Activated T-helper 1 cell treated with anti-CD3 and anti-CD28 coated beads, Interleukin-12 subunit alpha, Interleukin-12 subunit beta, Interleukin-2, Interleukin-4 antibody, amounts not matched to agents 30 ng/mL and 10 ng/mL and 1 ng/mL, durations not matched to agents 14 hours and 24 hours and 36 hours (primary cell): ENCODE measurements at regions of chr16 and their contacts with region 1.

Region 1: GRCh38 chr16:87203060-87203656 is 114.0 kb downstream of the C16orf95 start:
- DNase-seq: peak; percentile 36
- H3K4me3 Mint-ChIP-seq: no peak overlapping the region
- H3K27ac Mint-ChIP-seq: no peak overlapping the region
- H3K4me1 Mint-ChIP-seq: peaks cover 6% of the 10 kb centered on the region
- H3K27me3 Mint-ChIP-seq: peaks cover 9% of the 10 kb centered on the region

Region 2: DNA sequence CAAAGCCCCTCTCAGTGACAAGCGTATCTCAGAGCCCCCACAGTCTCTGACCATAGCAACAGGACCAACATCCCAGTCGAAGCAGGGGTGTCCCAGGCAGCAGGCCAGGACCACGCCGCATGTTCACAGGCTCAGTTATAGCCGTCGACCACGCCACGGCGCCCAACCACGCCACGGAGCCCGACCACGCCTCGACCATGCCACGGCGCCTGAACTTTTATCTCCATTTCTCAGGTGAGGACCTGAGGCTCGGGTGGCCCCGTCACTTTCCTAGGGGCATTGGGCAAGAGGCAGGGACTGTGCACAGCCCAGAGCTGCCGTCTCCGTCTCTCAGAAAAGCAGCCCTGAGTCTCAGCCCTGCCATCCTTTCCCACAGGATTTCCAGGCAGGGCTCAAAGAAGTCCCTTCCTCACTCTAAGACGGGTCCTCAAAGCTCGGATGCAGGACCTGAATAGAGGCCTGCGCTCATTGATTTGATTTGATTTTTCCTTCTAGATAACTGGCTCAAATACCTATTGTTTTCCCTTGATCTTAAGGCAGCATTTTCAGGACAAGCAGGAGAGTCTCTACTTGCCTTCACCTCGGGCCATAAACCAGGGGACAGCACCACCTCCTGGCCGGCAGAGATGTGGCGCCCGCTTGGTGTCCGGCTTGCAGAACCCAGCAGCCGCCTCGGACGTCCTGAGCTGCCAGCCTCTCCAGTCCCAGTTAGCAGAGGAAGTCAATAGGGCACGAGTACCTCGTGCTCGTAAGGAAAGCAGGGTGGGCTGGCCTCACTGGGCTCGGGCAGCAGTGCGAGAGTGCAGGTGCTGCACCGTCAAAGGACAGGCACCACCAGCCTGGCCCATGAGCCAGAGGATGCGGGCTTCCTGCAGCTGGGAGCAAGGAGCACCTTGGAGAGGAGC is 75.3 kb after region 1 on chr16:
- intact Hi-C with region 1: loop called (anchors 1 kb)
- DNase-seq: peak; percentile 38
- H3K4me3 Mint-ChIP-seq: no peak overlapping the region
- H3K27ac Mint-ChIP-seq: no peak overlapping the region
- H3K4me1 Mint-ChIP-seq: peaks cover 9% of the 10 kb centered on the region
- H3K27me3 Mint-ChIP-seq: no peaks in the 10 kb centered on the region

Region 3: DNA sequence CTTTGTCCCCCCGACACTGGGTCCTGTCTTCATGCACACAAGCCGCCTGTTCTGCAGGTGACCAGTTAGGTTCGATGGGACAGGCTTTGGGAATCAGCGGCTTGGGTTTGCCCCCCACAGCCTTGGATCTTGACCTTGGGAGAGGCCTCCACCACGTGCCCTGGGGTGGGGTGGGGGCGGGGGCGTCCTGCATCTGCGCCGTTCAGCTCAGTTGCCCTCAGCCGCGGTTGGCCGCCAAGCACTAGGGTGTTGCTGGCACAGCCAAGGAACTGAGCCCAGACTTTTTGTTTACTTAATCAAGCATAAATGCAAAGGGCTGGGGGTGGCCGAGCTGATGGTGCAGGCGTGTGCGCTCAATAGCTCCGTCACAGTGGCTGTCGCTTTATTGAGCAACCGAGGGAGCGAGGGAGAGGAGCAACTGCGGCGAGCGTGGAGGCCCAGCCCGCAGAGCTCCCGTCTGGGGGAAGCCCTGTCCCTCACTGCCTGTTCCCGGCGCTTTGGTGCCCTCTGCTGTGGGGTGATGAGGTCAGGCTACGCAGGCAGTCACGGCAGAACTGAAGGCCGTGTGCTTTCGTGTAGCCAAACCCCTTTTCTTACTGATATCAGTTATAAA is 433.0 kb after region 1 on chr16:
- intact Hi-C with region 1: loop called (anchors 5 kb)
- DNase-seq: peak; percentile 52
- H3K4me3 Mint-ChIP-seq: peak overlapping the region; percentile 45
- H3K27ac Mint-ChIP-seq: no peak overlapping the region
- H3K4me1 Mint-ChIP-seq: no peaks in the 10 kb centered on the region
- H3K27me3 Mint-ChIP-seq: peaks cover 11% of the 10 kb centered on the region